Activated CD4-positive, alpha-beta memory T cell treated with anti-CD3 and anti-CD28 coated beads, Interleukin-2, amount 10 ng/mL, durations not matched to agents 7 days and 5 days (primary cell): ENCODE measurements at regions of chr2 and their contacts with region 1.

Region 1: DNA sequence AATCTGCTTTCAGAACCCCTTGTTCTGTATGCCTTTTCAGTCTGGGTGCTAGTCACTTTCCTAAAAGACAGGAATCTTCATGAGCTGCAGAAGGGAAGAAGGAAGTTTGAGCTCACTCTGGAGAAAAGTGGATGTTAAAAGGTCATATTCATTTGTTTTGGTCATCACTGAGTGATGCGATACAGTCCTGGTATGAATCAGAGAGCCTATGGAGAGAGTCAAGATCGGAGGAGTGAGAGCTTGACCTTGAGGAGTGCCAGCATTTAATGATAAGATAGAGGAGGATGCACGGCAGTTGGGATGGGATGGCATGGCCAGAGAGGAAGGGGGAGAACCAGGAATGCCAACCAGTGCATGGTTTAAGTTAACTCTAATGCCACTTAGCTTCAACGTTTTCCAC is 19.6 kb downstream of the USP39 start:
- DNase-seq: no peak
- H3K4me3 Mint-ChIP-seq: no peak overlapping the region
- H3K27ac Mint-ChIP-seq: peak overlapping the region; percentile 9
- H3K4me1 Mint-ChIP-seq: peaks cover 10% of the 10 kb centered on the region
- H3K27me3 Mint-ChIP-seq: no peaks in the 10 kb centered on the region

Region 2: GRCh38 chr2:85619617-85620016 is 16.0 kb before region 1 on chr2:
- CTCF ChIA-PET with region 1: interaction called, 36 read pairs
- POLR2A ChIA-PET with region 1: interaction called, 7 read pairs
- DNase-seq: no peak
- H3K4me3 Mint-ChIP-seq: no peak overlapping the region
- H3K27ac Mint-ChIP-seq: no peak overlapping the region
- H3K4me1 Mint-ChIP-seq: peaks cover 33% of the 10 kb centered on the region
- H3K27me3 Mint-ChIP-seq: no peaks in the 10 kb centered on the region

Region 3: DNA sequence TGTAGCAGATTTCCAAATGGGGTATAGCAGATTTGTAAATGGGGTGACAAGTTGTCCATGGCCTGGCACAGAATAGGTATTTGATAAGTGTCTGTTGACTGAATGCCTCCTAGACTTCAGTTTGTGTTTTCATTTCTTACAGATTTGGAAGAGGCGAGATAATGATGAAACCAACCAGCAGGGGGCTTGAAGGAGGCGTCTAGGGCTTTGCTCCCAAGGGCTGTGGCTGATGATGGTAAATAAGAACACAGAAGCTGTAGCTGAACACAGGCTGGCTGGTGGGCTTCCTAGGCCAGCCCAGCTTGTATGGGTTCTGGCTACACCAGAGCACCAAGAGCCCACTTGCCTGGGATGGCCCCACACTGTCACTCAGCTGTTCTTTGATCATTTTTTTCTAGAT is 13.0 kb after region 1 on chr2:
- CTCF ChIA-PET with region 1: interaction called, 83 read pairs
- POLR2A ChIA-PET with region 1: no interaction called
- DNase-seq: peak; percentile 34
- H3K4me3 Mint-ChIP-seq: no peak overlapping the region
- H3K27ac Mint-ChIP-seq: peak overlapping the region; percentile 34
- H3K4me1 Mint-ChIP-seq: peaks cover 6% of the 10 kb centered on the region
- H3K27me3 Mint-ChIP-seq: no peaks in the 10 kb centered on the region

Region 4: DNA sequence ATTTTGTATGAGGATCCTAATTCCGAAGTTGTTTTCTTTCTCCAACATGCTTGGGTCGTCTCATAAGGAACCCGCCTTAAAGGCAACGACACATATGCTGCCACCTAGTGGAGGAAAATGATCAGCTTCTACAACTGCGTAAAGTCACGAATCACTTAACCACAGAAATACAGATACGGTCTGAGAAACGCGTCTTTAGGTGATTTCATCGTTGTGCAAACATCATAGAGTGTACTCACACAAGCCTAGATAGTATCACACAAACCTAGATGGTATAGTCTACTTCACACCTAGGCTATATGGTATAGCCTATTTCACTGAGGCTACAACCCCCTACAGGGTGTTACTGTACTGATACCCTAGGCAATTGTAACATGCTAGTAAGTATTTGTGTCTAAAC is 71.7 kb after region 1 on chr2:
- CTCF ChIA-PET with region 1: interaction called, 58 read pairs
- POLR2A ChIA-PET with region 1: interaction called, 7 read pairs
- DNase-seq: peak; percentile 75
- H3K4me3 Mint-ChIP-seq: no peak overlapping the region
- H3K27ac Mint-ChIP-seq: peak overlapping the region; percentile 86
- H3K4me1 Mint-ChIP-seq: peaks cover 80% of the 10 kb centered on the region
- H3K27me3 Mint-ChIP-seq: peaks cover 5% of the 10 kb centered on the region

Region 5: GRCh38 chr2:85813982-85814801 is 178.6 kb after region 1 on chr2:
- CTCF ChIA-PET with region 1: interaction called, 60 read pairs
- POLR2A ChIA-PET with region 1: interaction called, 7 read pairs
- DNase-seq: peak; percentile 88
- H3K4me3 Mint-ChIP-seq: no peak overlapping the region
- H3K27ac Mint-ChIP-seq: no peak overlapping the region
- H3K4me1 Mint-ChIP-seq: no peaks in the 10 kb centered on the region
- H3K27me3 Mint-ChIP-seq: peaks cover 31% of the 10 kb centered on the region

Region 6: DNA sequence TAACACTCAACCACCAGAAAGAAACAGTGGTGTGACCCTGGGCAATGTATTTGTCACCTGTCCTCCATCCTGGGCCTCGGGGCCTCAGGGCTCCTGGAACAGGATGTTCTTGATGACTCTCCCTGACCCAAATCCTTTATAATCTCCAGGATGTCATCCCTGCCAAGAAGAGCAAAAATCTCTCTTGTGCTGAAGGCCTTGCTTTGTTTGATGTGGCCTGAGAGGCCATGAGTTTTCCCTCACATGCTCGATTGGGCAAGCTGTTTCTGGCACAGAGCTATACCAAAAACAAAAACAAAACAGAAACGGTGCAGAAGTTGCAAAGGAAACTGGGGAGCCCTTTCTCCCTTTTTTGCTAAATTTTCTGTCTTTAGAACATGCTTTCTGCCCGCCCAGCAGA is 288.9 kb after region 1 on chr2:
- CTCF ChIA-PET with region 1: no interaction called
- POLR2A ChIA-PET with region 1: no interaction called
- DNase-seq: no peak
- H3K4me3 Mint-ChIP-seq: no peak overlapping the region
- H3K27ac Mint-ChIP-seq: no peak overlapping the region
- H3K4me1 Mint-ChIP-seq: peaks cover 18% of the 10 kb centered on the region
- H3K27me3 Mint-ChIP-seq: peaks cover 2% of the 10 kb centered on the region